Right cardiac atrium (tissue), 5 donors: ENCODE measurements at regions of chr16 and their contacts with region 1.

Region 1: DNA sequence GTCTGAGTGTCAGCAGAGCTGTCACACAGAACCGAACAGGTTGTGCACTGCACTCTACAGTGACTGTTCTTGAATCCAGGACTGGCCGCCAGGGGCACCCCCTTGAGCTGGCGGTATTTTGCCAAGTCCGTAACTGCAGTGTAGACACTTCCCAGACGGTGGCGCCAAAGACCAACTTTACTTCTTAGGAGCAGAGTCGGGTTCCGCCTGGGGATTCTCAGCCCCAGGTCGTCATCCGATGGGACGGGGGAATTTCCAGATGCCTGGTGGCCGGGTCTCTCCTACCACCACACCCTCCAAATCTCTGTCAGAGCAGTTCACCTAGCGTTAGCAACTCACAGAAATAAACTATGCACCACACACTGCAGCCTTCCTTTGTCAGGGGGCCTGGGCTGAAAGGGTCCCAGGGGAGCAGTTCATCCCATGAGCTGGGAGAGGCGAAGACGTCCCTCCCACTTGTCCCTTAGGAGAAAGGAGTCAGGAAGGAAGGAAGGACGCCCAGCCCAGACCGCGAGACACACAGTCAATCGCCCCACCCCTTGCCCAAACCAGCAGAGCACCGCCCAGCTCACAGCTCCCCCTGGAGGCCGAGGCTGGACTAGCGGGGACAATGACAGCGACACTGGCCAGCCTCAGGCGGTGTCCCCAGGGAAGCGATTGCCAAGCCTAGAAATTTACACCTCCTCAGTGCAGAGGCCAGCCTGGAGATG is 7.4 kb upstream of the RIPOR1 start:
- DNase-seq: peak; percentile 94 to 97 (median 97)
- ATAC-seq: peak; percentile 94 to 95
- H3K4me3 ChIP-seq: peak overlapping the region; percentile 37
- H3K27ac ChIP-seq: peak overlapping the region; percentile 97
- H3K4me1 ChIP-seq: no peaks in the 10 kb centered on the region
- H3K27me3 ChIP-seq: no peaks in the 10 kb centered on the region

Region 2: GRCh38 chr16:67399181-67399733 is 122.0 kb before region 1 on chr16:
- intact Hi-C with region 1: no loop called
- DNase-seq: peak; percentile 42 to 89 (median 84)
- ATAC-seq: peak; percentile 29 to 48
- H3K4me3 ChIP-seq: no peak overlapping the region
- H3K27ac ChIP-seq: no peak overlapping the region
- H3K4me1 ChIP-seq: peaks cover 12% of the 10 kb centered on the region
- H3K27me3 ChIP-seq: no peaks in the 10 kb centered on the region

Region 3: GRCh38 chr16:67641779-67642708 is 120.8 kb after region 1 on chr16:
- intact Hi-C with region 1: loop called in 1 of 4 experiments (anchors 2 kb)
- DNase-seq: peak; percentile 72 to 89 (median 85)
- ATAC-seq: peak; percentile 69 to 84
- H3K4me3 ChIP-seq: no peak overlapping the region
- H3K27ac ChIP-seq: no peak overlapping the region
- H3K4me1 ChIP-seq: no peaks in the 10 kb centered on the region
- H3K27me3 ChIP-seq: no peaks in the 10 kb centered on the region

Region 4: GRCh38 chr16:67667817-67668494 is 146.7 kb after region 1 on chr16:
- intact Hi-C with region 1: loop called in 3 of 4 experiments (anchors 2 to 10 kb)
- DNase-seq: peak; percentile 88 to 95 (median 94)
- ATAC-seq: peak; percentile 83 to 86
- H3K4me3 ChIP-seq: no peak overlapping the region
- H3K27ac ChIP-seq: peak overlapping the region; percentile 75
- H3K4me1 ChIP-seq: peaks cover 5% of the 10 kb centered on the region
- H3K27me3 ChIP-seq: no peaks in the 10 kb centered on the region